Activated CD4-positive, alpha-beta T cell treated with anti-CD3 and anti-CD28 coated beads for 36 hours (primary cell): ENCODE measurements at regions of chr11 and their contacts with region 1.

Region 1: DNA sequence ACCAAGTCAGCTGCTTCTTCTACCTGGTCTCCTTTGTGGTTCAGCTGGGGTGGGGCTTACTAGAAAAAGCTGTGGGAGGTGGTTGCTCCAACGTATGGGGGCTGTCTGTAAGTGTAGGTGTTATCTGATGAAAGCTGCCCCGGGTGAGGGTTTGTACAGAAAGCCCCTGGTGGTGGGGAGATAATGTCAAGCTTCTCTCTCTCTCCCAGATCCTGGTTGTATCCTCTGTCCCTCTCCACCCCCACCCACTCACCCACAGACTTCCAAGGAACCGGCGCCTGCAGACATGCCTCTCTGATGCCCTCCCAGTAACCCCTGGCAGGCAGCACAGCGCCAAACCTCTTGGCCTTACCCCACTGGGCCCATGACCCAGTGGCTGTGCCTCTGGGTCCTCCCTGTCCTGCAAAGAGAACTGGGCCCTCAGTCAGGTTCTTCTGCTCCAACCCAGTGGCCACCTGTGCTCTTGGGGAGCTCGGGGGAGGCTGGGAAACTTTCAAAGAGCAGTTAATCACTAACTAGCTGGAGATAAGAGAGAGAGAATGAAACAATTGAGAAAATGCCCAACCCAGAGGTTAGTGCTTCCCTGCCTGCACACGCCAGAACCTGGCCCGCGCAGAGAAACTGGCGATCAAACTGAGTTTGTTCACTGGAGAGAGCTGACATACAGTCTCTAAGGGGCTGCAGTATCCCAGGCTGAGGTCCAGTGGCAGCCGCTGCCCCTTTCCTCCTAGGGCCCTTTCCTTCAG is 20.4 kb upstream of the EHF start:
- DNase-seq: no peak
- ATAC-seq: no peak
- H3K4me3 Mint-ChIP-seq: no peak overlapping the region
- H3K27ac Mint-ChIP-seq: no peak overlapping the region
- H3K4me1 Mint-ChIP-seq: peaks cover 8% of the 10 kb centered on the region
- H3K27me3 Mint-ChIP-seq: peaks cover 6% of the 10 kb centered on the region

Region 2: DNA sequence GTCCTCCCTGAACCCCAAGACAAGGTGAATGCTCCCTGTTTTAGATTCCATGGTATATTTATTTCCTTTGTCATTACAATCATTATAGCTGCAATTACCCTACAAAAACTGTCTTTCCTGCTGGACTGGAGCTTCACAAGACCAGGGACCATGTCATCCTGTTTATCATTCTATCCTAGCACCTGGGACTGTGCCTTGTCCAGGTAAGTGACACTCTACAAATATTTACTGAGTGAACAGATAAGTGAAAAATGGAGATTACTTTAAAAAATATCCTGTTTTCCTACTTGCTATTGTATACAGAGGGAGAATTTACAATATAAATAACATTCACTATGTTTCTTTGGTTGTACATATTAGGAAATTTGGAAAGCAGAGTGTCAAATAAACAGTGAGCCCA is 64.4 kb before region 1 on chr11:
- CTCF ChIA-PET with region 1: no interaction called
- POLR2A ChIA-PET with region 1: no interaction called
- intact Hi-C with region 1: no loop called
- DNase-seq: no peak
- ATAC-seq: no peak
- H3K4me3 Mint-ChIP-seq: no peak overlapping the region
- H3K27ac Mint-ChIP-seq: no peak overlapping the region
- H3K4me1 Mint-ChIP-seq: no peaks in the 10 kb centered on the region
- H3K27me3 Mint-ChIP-seq: peaks cover 23% of the 10 kb centered on the region

Region 3: DNA sequence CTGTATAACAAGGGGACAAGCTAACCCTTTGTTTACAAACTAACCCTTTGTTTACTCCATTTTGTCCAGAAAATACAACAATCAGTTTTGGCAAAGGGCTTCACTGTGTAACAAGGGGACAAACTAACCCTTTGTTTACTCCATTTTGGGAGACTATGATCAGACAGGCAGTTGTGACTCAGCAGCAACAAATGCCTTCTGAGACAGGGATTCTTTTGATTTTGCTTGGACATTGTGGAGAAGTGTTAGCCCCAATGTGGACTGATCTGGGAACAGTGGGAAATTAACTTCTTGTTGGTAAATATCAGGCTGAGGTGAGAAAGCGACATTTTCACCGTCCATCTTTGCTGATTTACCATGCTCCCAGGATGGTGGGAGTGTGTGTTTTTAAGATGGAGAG is 21.4 kb after region 1 on chr11:
- CTCF ChIA-PET with region 1: interaction called, 4 read pairs
- POLR2A ChIA-PET with region 1: no interaction called
- intact Hi-C with region 1: loop called in 1 of 2 experiments (anchors 1 kb)
- DNase-seq: no peak
- ATAC-seq: no peak
- H3K4me3 Mint-ChIP-seq: no peak overlapping the region
- H3K27ac Mint-ChIP-seq: no peak overlapping the region
- H3K4me1 Mint-ChIP-seq: peaks cover 6% of the 10 kb centered on the region
- H3K27me3 Mint-ChIP-seq: peaks cover 22% of the 10 kb centered on the region